ENCODE measurements at regions of chr10 and their contacts with region 1.

Region 1: DNA sequence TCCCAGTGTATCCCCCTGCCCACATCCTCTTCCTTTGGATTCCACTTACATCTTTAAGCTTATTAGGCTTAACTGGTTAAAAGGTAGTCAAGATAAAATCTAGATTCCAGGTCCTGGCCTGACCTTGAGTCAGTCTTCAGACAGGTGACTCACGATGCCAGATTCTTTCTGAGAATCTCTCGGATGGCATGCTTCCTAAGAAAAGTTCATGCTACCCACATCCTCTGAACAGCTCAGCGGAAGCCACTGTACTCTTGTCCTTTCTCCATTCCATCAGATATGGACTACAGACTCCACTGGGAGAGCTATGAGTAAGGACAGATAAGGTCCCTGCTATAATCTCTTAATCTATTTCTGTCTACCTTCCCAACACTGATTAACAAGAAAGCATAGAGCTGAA is 43.4 kb downstream of the DNMBP start:
- DNase-seq: peak; percentile 95
- H3K4me3 ChIP-seq: no peak overlapping the region
- H3K27ac ChIP-seq: peak overlapping the region; percentile 53
- H3K4me1 ChIP-seq: peaks cover 43% of the 10 kb centered on the region
- H3K27me3 ChIP-seq: no peaks in the 10 kb centered on the region
- CTCF ChIP-seq: no peak

Region 2: DNA sequence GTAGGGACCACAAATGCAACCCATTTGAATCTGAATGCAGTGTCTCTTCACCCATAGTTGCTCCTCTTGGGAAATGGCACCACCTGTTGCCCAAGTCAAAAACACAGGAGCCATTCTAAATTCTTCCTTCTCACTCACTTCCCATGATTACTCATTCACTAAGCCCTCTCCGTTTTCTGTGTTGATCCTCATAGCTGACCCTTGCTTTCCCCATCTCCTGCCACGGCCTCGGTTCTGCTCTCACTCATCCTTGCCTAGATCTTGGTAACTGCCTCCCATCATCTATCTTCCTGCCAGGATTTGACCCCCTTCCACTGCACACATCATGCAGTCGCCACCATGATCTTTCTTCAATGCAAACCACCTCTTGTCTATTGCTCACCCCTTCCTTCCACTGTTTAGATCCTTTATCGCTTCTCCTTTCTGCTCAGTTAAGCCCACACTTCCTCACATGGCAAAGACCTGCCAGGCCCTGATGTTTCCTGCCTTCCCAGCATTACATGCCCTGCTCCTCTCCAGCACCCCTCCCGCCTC is 134.4 kb after region 1 on chr10:
- CTCF ChIA-PET with region 1: no interaction called
- dilution Hi-C with region 1: no loop called
- in situ Hi-C with region 1: no loop called
- intact Hi-C with region 1: loop called (anchors 5 kb)
- DNase-seq: peak; percentile 25
- H3K4me3 ChIP-seq: no peak overlapping the region
- H3K27ac ChIP-seq: no peak overlapping the region
- H3K4me1 ChIP-seq: no peaks in the 10 kb centered on the region
- H3K27me3 ChIP-seq: peaks cover 1% of the 10 kb centered on the region
- CTCF ChIP-seq: peak; percentile 13 to 37